Activated CD8-positive, alpha-beta T cell treated with anti-CD3 and anti-CD28 coated beads, Interleukin-2, amount 10 ng/mL, durations not matched to agents 7 days and 5 days (primary cell): ENCODE measurements at regions of chr3 and their contacts with region 1.

Region 1: GRCh38 chr3:43071313-43071893 is 34.5 kb downstream of the POMGNT2 start:
- DNase-seq: peak; percentile 33
- ATAC-seq: no peak
- H3K4me3 Mint-ChIP-seq: no peak overlapping the region
- H3K27ac Mint-ChIP-seq: no peak overlapping the region
- H3K4me1 Mint-ChIP-seq: no peaks in the 10 kb centered on the region
- H3K27me3 Mint-ChIP-seq: no peaks in the 10 kb centered on the region

Region 2: GRCh38 chr3:42961633-42962032 is 109.8 kb before region 1 on chr3:
- CTCF ChIA-PET with region 1: interaction called, 24 read pairs
- POLR2A ChIA-PET with region 1: no interaction called
- DNase-seq: peak; percentile 40
- ATAC-seq: no peak
- H3K4me3 Mint-ChIP-seq: no peak overlapping the region
- H3K27ac Mint-ChIP-seq: no peak overlapping the region
- H3K4me1 Mint-ChIP-seq: peaks cover 2% of the 10 kb centered on the region
- H3K27me3 Mint-ChIP-seq: peaks cover 6% of the 10 kb centered on the region